ENCODE measurements at regions of chr2 and their contacts with region 1.

Region 1: GRCh38 chr2:236177967-236178899 is 10.0 kb upstream of the GBX2 start:
- DNase-seq: no peak
- ATAC-seq: peak; percentile 73 to 78
- H3K4me3 ChIP-seq: peak overlapping the region; percentile 34
- H3K27ac ChIP-seq: no peak overlapping the region
- H3K4me1 ChIP-seq: peaks cover 19% of the 10 kb centered on the region
- H3K27me3 ChIP-seq: peaks cover 81% of the 10 kb centered on the region
- CTCF ChIP-seq: peak; percentile 69

Region 2: GRCh38 chr2:235780401-235780800 is 397.8 kb before region 1 on chr2:
- intact Hi-C with region 1: loop called (anchors 10 kb)
- DNase-seq: no peak
- ATAC-seq: no peak
- H3K4me3 ChIP-seq: no peak overlapping the region
- H3K27ac ChIP-seq: no peak overlapping the region
- H3K4me1 ChIP-seq: no peaks in the 10 kb centered on the region
- H3K27me3 ChIP-seq: no peaks in the 10 kb centered on the region
- CTCF ChIP-seq: no peak

Region 3: GRCh38 chr2:236049981-236050380 is 128.3 kb before region 1 on chr2:
- intact Hi-C with region 1: no loop called
- DNase-seq: no peak
- ATAC-seq: no peak
- H3K4me3 ChIP-seq: no peak overlapping the region
- H3K27ac ChIP-seq: no peak overlapping the region
- H3K4me1 ChIP-seq: no peaks in the 10 kb centered on the region
- H3K27me3 ChIP-seq: no peaks in the 10 kb centered on the region
- CTCF ChIP-seq: no peak